Spleen (tissue), 13 donors: ENCODE measurements at regions of chr19 and their contacts with region 1.

Region 1: DNA sequence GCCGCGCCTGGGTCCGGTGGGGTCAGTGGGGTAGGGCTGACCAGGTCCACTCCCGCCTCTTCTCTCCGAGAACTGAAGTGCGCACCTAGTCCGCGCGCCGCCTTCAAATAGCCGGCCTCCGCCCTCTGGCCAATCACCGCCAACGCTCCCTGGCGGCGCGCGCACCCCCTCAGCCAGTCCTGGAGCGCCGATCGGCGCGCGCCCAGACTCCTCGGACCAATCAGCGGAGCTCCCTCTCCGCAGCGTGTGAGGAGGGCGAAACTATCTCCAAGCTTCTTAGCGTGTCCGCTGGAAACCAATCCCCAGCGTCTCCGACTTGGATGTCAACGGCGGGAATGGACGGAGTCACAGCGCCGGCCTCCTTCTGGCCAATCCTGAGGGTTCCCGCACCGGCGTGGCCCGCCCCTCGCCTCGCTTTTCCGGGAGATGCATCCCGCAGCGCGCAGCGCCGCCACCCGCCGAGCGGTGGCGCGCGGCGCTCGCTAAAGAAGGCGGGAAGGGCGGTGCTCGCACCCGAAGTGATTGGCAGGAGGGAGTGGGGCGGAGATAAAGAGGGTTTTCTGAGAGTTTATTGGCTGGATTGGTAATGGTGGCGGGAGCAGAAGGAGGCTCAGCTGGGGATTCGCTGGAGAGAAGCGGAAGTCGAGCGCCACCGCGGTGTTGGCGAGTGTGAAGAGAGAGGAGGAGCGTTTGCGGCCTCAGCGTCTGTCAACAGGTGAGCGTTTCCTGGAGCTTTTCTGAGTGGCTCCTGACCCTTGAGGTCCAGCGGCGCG is at the start of gene ASF1B:
- DNase-seq: peak; percentile 99
- H3K4me3 ChIP-seq: peak within 1 kb of the TSS; percentile 66 to 93 (median 76)
- H3K27ac ChIP-seq: peak within 1 kb of the TSS; percentile 96 to 99 (median 98)
- H3K4me1 ChIP-seq: peaks cover 17 to 64% (median 47%) of the 10 kb centered on the region in 6 donors
- H3K27me3 ChIP-seq: no peaks in the 10 kb centered on the region
- CTCF ChIP-seq: peak; percentile 90 to 100 (median 98)
- POLR2A ChIP-seq: peak in 1 of 3 donors; percentile 73
- total RNA-seq, gene ASF1B: 4.0 to 24.8 (median 7.0) TPM

Region 2: GRCh38 chr19:14081325-14082093 is 55.2 kb before region 1 on chr19:
- intact Hi-C with region 1: loop called (anchors 10 kb)
- DNase-seq: peak; percentile 97
- H3K4me3 ChIP-seq: peak overlapping the region; percentile 66 to 77 (median 70)
- H3K27ac ChIP-seq: peak overlapping the region; percentile 85 to 96 (median 92)
- H3K4me1 ChIP-seq: peaks cover 7 to 64% (median 31%) of the 10 kb centered on the region in 6 donors
- H3K27me3 ChIP-seq: no peaks in the 10 kb centered on the region
- CTCF ChIP-seq: peak in 3 of 11 experiments; percentile 7 to 44 (median 20)
- POLR2A ChIP-seq: peak in 1 of 3 donors; percentile 74